ENCODE measurements at regions of chr11 and their contacts with region 1.

Region 1: GRCh38 chr11:111766093-111766833 is at the start of gene PPP2R1B:
- DNase-seq: peak; percentile 33 to 62 (median 53)
- H3K4me3 ChIP-seq: peak within 1 kb of the TSS; percentile 83 to 93 (median 85)
- H3K4me3 Mint-ChIP-seq: peak within 1 kb of the TSS; percentile 100
- H3K27ac ChIP-seq: peak within 1 kb of the TSS; percentile 11 to 65
- H3K27ac Mint-ChIP-seq: peak within 1 kb of the TSS; percentile 80 to 99 (median 94)
- H3K4me1 ChIP-seq: peaks cover 14 to 23% of the 10 kb centered on the region in 2 donors
- H3K4me1 Mint-ChIP-seq: peaks cover 21% of the 10 kb centered on the region
- H3K27me3 ChIP-seq: no peaks in the 10 kb centered on the region
- H3K27me3 Mint-ChIP-seq: peaks cover 0 to 7% (median 6%) of the 10 kb centered on the region in 3 donors
- CTCF ChIP-seq: no peak
- polyA plus RNA-seq, gene PPP2R1B: 5.4 to 16.9 (median 11.2) TPM

Region 2: DNA sequence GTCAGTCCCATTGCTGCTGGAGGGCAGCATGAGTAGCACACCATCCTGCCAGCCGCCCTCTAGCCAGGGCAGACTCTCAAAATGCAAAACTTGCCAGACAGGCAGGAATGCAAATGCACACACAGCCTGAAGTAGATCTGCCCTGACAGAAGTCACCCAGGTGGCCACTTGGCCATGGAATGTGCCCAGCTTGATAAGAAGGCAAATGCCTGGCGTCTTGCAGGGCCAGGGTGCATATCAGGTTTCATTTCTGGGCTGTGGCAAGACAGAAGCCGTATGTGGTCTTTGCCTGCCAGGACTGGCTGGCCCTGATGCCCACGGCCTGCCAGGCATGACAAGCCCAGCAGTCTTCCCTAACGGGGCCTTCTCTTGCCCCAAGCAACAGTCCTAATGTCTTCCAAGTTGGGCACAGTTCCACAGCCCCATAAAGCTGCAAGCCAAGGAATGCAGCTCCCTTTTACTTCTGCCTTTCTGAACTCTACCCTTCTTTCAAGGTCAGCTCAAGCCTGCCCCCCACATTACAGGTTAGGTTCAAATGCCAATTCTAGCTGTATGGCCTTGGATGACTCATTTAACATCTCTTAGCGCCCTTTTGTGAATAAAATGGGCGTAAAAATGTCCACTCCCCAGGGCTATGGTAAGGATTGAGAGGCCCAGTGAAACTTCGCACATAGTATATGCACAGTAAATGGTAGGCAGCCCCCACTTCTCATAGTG is 438.2 kb before region 1 on chr11:
- intact Hi-C with region 1: no loop called
- DNase-seq: no peak
- H3K4me3 ChIP-seq: no peak overlapping the region
- H3K4me3 Mint-ChIP-seq: no peak overlapping the region
- H3K27ac ChIP-seq: no peak overlapping the region
- H3K27ac Mint-ChIP-seq: no peak overlapping the region
- H3K4me1 ChIP-seq: no peaks in the 10 kb centered on the region
- H3K4me1 Mint-ChIP-seq: no peaks in the 10 kb centered on the region
- H3K27me3 ChIP-seq: no peaks in the 10 kb centered on the region
- H3K27me3 Mint-ChIP-seq: peaks cover 0 to 7% (median 0%) of the 10 kb centered on the region in 3 donors
- CTCF ChIP-seq: no peak

Region 3: GRCh38 chr11:111814557-111815320 is 48.5 kb after region 1 on chr11:
- intact Hi-C with region 1: no loop called
- DNase-seq: no peak
- H3K4me3 ChIP-seq: no peak overlapping the region
- H3K4me3 Mint-ChIP-seq: no peak overlapping the region
- H3K27ac ChIP-seq: no peak overlapping the region
- H3K27ac Mint-ChIP-seq: no peak overlapping the region
- H3K4me1 ChIP-seq: peaks cover 0 to 4% of the 10 kb centered on the region in 2 donors
- H3K4me1 Mint-ChIP-seq: peaks cover 7% of the 10 kb centered on the region
- H3K27me3 ChIP-seq: no peaks in the 10 kb centered on the region
- H3K27me3 Mint-ChIP-seq: no peaks in the 10 kb centered on the region
- CTCF ChIP-seq: no peak

Region 4: DNA sequence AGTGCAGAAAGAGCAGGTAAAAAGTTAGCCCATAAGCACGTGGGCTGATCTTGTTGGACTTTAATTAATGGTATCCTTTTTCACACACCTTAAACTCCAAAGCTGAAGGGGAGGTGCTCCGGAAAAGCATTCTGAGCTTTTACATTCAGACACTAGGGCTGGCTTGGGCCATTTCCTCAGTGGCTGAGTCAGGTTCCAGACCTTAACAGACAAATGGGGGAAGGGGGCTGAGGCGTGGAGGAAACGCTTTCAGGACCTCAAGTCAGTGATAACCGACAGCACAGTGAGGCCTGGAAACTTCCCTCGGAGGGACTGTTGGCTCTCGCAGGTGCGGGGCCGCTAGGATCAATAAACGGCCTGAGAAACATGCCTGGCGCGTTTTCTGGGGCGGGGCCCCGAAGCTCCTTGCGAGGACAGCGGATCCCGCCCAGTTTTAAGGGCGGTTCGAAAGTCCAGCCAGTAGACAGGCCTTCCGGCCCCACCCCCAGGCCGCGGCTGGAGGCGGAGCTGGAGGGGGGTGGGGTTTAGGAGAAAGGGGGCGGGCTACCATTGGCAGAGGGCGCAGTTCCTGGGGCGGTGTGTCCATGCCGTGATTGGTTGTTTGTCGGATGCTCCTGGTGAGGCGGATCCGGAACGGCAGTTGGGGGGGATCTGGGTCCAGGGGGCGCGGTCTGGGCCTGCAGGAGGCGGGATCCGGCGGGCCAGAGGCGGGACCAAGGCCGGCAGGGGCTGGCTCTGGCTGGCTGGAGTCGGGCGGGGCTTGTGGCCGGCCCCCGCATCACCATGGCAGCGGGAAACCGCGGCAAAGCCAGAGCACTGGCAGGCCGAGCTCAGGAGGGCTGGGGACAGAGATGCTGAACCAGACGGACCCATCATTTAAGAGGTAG is 160.5 kb after region 1 on chr11:
- intact Hi-C with region 1: loop called in 1 of 2 experiments (anchors 5 kb)
- DNase-seq: peak; percentile 91 to 95 (median 94)
- H3K4me3 ChIP-seq: peak overlapping the region; percentile 61 to 77 (median 73)
- H3K4me3 Mint-ChIP-seq: peak overlapping the region; percentile 85 to 92
- H3K27ac ChIP-seq: peak overlapping the region; percentile 70 to 81
- H3K27ac Mint-ChIP-seq: peak overlapping the region; percentile 87 to 95 (median 93)
- H3K4me1 ChIP-seq: peaks cover 24 to 34% of the 10 kb centered on the region in 2 donors
- H3K4me1 Mint-ChIP-seq: peaks cover 28% of the 10 kb centered on the region
- H3K27me3 ChIP-seq: no peaks in the 10 kb centered on the region
- H3K27me3 Mint-ChIP-seq: peaks cover 0 to 2% (median 1%) of the 10 kb centered on the region in 3 donors
- CTCF ChIP-seq: no peak

Measured in CD14-positive monocyte (primary cell).